MCF 10A (cell line): ENCODE measurements at regions of chr17 and their contacts with region 1.

Region 1: DNA sequence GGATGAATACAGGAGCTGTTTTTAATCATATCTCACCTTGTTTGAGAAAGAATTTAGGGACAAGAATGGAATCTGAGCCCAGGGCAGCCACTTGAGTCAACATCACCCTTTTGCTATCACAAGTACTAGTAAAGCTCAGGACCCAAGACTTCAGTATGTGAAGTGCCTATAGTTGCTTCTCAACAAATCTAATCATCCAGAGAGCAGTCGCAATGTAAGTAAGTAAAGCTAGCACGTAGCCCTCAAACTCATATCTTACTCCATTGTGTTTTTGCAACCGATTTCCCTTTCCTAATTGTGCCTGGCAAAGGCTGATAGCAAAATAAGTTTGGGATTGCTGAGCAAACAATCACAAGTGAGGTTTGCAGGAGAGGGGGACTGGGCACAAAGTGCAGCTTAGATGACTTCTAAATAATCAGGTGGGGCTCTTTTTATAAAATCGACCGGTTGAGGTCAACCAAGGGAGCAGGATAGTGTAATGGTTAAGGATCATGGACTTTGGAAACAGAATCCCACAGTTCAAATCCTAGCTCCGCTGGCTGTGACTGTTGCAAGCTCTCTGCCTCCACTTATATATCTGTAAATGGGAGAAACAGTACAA is 13.0 kb downstream of the TOB1 start:
- DNase-seq: no peak
- H3K4me3 Mint-ChIP-seq: no peak overlapping the region
- H3K27ac Mint-ChIP-seq: peak overlapping the region; percentile 90
- H3K4me1 Mint-ChIP-seq: peaks cover 15% of the 10 kb centered on the region
- H3K27me3 Mint-ChIP-seq: no peaks in the 10 kb centered on the region
- CTCF ChIP-seq: no peak

Region 2: GRCh38 chr17:50613007-50613992 is 239.8 kb before region 1 on chr17:
- CTCF ChIA-PET with region 1: no interaction called
- POLR2A ChIA-PET with region 1: no interaction called
- intact Hi-C with region 1: no loop called
- DNase-seq: no peak
- H3K4me3 Mint-ChIP-seq: no peak overlapping the region
- H3K27ac Mint-ChIP-seq: no peak overlapping the region
- H3K4me1 Mint-ChIP-seq: peaks cover 4% of the 10 kb centered on the region
- H3K27me3 Mint-ChIP-seq: no peaks in the 10 kb centered on the region
- CTCF ChIP-seq: no peak

Region 3: DNA sequence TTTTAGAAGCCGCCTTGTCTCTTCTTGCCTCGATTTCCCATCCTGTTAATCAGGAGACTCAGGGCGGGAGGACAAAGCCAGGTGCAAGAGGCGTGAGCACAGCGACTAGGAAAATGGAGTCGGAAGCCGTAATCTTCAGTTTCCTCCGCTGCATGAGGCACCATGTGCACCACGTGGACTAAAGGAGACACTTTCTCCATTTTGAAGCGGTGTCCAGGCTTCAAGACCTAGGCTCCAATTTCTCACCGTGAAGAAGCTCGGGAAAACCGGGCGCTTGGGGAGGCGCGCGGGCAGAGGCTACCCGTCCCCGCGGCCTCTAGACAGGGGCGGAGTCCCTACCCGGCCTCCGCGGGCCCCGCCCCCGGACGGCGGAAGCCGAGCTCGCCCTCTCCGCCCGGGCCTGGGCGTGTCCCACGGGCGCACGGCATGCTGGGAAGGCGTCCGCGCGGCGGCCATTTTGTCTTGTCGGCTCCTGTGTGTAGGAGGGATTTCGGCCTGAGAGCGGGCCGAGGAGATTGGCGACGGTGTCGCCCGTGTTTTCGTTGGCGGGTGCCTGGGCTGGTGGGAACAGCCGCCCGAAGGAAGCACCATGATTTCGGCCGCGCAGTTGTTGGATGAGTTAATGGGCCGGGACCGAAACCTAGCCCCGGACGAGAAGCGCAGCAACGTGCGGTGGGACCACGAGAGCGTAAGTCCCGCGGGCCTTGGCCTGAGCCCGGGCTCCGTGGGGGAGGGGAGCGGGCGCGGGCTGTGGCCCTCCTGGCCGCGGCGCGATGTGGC is 133.8 kb before region 1 on chr17 and contains the start of gene LUC7L3:
- CTCF ChIA-PET with region 1: no interaction called
- POLR2A ChIA-PET with region 1: no interaction called
- intact Hi-C with region 1: no loop called
- DNase-seq: peak; percentile 95
- H3K4me3 Mint-ChIP-seq: peak within 1 kb of the TSS; percentile 96
- H3K27ac Mint-ChIP-seq: peak within 1 kb of the TSS; percentile 99
- H3K4me1 Mint-ChIP-seq: peaks cover 6% of the 10 kb centered on the region
- H3K27me3 Mint-ChIP-seq: no peaks in the 10 kb centered on the region
- CTCF ChIP-seq: no peak
- total RNA-seq, gene LUC7L3: 99.4 and 108 TPM in 2 replicates

Region 4: DNA sequence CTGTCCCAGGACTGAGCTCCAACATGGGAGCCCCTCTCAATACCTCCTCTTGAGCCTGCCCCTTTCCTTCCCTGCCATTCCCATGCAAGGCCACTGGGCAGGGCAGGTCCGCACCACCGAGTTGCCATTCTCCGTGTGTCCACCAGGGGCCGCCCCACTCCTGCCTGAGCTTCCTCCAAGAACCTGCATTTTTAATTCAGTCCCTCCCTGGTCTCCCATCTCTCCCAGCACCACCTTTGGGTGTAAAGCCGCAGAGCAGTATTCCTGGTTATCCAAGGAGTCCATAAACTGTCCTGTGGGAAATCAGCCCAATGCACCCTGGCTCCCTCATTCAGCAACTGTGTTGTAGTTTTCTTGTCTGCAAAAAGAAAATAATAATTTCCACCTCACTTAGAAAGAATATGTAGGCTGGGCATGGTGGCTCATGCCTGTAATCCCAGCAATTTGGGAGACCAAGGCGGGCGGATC is 69.9 kb before region 1 on chr17:
- CTCF ChIA-PET with region 1: interaction called, 70 read pairs
- POLR2A ChIA-PET with region 1: no interaction called
- intact Hi-C with region 1: no loop called
- DNase-seq: peak; percentile 84
- H3K4me3 Mint-ChIP-seq: no peak overlapping the region
- H3K27ac Mint-ChIP-seq: no peak overlapping the region
- H3K4me1 Mint-ChIP-seq: peaks cover 28% of the 10 kb centered on the region
- H3K27me3 Mint-ChIP-seq: no peaks in the 10 kb centered on the region
- CTCF ChIP-seq: peak; percentile 94

Region 5: DNA sequence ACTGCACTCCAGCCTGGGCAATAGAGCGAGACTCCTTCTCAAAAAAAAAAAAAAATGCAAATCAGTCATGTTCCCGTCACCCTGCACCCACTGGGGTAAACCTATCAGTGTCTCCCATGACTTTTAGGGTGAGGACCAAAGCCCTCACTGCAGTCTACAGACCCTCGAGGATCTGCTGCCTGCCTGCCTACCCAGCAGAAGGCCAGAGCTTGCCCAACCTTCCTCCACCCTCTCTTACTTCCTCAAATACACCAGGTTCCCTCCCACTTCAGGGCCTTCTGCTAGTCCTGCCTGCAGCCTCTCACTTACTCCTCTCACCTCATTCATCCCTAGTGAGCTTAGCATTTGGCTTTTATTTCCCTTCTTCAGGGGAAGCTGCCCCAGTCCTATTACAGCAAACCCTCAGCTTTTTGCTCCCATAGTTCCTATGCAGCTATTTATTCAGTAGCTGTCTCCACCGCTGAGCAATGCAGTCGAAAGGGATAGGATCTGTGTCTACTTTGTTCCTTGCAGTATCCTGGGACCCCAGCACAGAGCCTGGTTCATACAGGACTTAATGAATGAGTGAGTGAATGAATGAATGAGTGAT is 30.8 kb after region 1 on chr17:
- CTCF ChIA-PET with region 1: interaction called, 11 read pairs
- POLR2A ChIA-PET with region 1: no interaction called
- intact Hi-C with region 1: no loop called
- DNase-seq: no peak
- H3K4me3 Mint-ChIP-seq: no peak overlapping the region
- H3K27ac Mint-ChIP-seq: peak overlapping the region; percentile 90
- H3K4me1 Mint-ChIP-seq: peaks cover 22% of the 10 kb centered on the region
- H3K27me3 Mint-ChIP-seq: no peaks in the 10 kb centered on the region
- CTCF ChIP-seq: no peak

Region 6: GRCh38 chr17:50944054-50944901 is 91.2 kb after region 1 on chr17:
- CTCF ChIA-PET with region 1: interaction called, 429 read pairs
- POLR2A ChIA-PET with region 1: interaction called, 473 read pairs
- intact Hi-C with region 1: no loop called
- DNase-seq: no peak
- H3K4me3 Mint-ChIP-seq: no peak overlapping the region
- H3K27ac Mint-ChIP-seq: no peak overlapping the region
- H3K4me1 Mint-ChIP-seq: peaks cover 6% of the 10 kb centered on the region
- H3K27me3 Mint-ChIP-seq: no peaks in the 10 kb centered on the region
- CTCF ChIP-seq: no peak

Region 7: GRCh38 chr17:50956750-50957523 is 103.8 kb after region 1 on chr17:
- CTCF ChIA-PET with region 1: interaction called, 429 read pairs
- POLR2A ChIA-PET with region 1: interaction called, 473 read pairs
- intact Hi-C with region 1: loop called (anchors 1 kb)
- DNase-seq: peak; percentile 72
- H3K4me3 Mint-ChIP-seq: no peak overlapping the region
- H3K27ac Mint-ChIP-seq: no peak overlapping the region
- H3K4me1 Mint-ChIP-seq: peaks cover 32% of the 10 kb centered on the region
- H3K27me3 Mint-ChIP-seq: no peaks in the 10 kb centered on the region
- CTCF ChIP-seq: peak; percentile 64

Region 8: GRCh38 chr17:51000835-51001638 is 147.9 kb after region 1 on chr17:
- CTCF ChIA-PET with region 1: interaction called, 12 read pairs
- POLR2A ChIA-PET with region 1: no interaction called
- intact Hi-C with region 1: no loop called
- DNase-seq: peak; percentile 69
- H3K4me3 Mint-ChIP-seq: no peak overlapping the region
- H3K27ac Mint-ChIP-seq: no peak overlapping the region
- H3K4me1 Mint-ChIP-seq: no peaks in the 10 kb centered on the region
- H3K27me3 Mint-ChIP-seq: no peaks in the 10 kb centered on the region
- CTCF ChIP-seq: peak; percentile 55